Endothelial cell of umbilical vein (primary cell): ENCODE measurements at regions of chr13 and their contacts with region 1.

Region 1: DNA sequence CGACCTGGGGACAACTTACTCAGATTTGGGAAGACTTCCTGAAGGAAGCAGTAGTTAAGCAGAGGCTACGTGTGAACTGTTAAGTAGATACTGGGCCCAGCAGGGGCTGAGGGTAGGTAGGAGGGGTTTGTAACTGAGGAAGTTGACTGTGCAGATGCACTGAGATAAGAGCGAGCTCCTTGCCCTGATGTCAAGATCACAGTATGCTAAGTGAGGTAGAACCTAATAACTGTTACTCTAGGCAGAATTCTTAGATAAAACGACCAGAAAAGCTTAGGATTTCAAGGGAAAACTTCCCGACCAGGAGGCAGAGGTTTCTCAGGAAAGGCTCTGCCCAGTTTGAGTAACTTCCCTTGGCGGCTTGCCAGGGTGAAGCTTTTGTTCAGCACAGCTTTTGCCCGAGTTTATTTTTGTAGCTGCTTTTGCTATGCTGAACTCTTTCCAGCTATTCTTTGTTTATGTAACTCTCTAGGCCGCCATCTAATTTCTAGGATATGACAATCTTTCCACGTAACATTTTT is 632.1 kb downstream of the DIAPH3 start:
- DNase-seq: peak; percentile 98
- H3K4me3 ChIP-seq: no peak overlapping the region
- H3K27ac ChIP-seq: peak overlapping the region; percentile 73
- H3K4me1 ChIP-seq: peaks cover 40% of the 10 kb centered on the region
- H3K27me3 ChIP-seq: no peaks in the 10 kb centered on the region
- CTCF ChIP-seq: no peak
- POLR2A ChIP-seq: peak; percentile 68

Region 2: DNA sequence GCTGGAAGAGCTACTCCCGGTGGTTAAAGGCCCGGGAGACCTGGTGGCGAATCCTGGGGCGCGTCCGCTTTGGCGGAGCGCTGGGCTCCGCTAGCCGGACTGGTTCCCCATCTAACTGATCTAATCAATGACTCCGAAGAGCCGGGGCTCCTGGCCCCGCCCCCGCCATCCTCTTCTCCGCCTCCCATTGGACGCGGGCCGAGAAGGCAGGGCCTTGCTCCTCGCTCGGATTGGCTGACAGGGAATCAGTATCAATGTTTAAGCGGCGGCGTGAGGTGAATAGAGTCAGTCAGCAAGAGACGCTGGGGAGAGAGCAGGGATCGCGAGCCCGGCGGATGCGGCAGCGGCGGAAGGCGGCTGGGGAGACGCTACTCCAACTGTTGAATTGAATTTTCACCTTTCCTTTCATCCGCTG is 1901.8 kb before region 1 on chr13:
- CTCF ChIA-PET with region 1: interaction called, 3 read pairs
- POLR2A ChIA-PET with region 1: no interaction called
- dilution Hi-C with region 1: no loop called
- intact Hi-C with region 1: loop called (anchors 5 kb)
- DNase-seq: peak; percentile 95
- H3K4me3 ChIP-seq: peak overlapping the region; percentile 46 to 75 (median 68)
- H3K27ac ChIP-seq: no peak overlapping the region
- H3K4me1 ChIP-seq: peaks cover 24% of the 10 kb centered on the region
- H3K27me3 ChIP-seq: peaks cover 5 to 11% of the 10 kb centered on the region in 2 experiments
- CTCF ChIP-seq: no peak
- POLR2A ChIP-seq: peak; percentile 84

Region 3: DNA sequence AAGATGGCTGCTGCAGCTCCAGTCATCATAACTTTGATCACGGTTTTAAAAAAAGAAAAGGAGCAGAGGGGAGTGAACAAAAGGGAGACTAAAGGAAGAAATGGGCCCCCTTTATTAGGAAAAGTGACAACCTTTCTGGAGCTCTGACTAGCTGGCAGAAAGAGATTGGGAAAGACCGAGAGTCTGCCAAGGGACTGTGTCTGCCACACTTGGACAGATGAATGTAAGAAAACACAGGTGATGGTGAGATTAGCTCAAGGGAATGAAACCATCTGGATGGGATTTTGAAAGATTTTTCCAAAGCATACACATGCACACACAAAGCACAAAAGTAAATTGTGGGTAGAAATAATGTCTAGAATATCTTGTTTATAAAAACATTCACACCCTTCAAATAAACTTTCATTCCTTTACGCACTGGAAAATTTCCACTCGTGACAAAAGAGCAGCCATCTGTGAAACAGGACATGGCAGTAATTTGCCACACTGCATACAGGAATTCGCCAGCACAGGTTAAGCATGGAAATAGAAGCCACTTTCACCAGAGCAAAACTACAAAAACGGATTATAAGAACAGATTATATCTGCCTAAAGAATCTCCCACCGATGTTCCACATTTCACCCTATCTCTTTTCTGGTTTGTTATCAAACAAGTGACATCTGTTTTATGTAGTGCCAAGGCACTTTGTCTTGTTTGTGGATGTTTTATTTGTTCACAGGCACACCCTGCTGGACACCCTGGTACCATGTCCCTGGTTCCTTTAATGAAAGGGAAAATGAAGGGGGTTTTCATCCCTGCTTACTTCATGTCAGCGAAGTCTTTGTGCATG is 187.4 kb before region 1 on chr13:
- CTCF ChIA-PET with region 1: no interaction called
- POLR2A ChIA-PET with region 1: no interaction called
- dilution Hi-C with region 1: no loop called
- intact Hi-C with region 1: loop called (anchors 5 kb)
- DNase-seq: no peak
- H3K4me3 ChIP-seq: no peak overlapping the region
- H3K27ac ChIP-seq: no peak overlapping the region
- H3K4me1 ChIP-seq: peaks cover 12% of the 10 kb centered on the region
- H3K27me3 ChIP-seq: no peaks in the 10 kb centered on the region
- CTCF ChIP-seq: no peak
- POLR2A ChIP-seq: no peak

Region 4: DNA sequence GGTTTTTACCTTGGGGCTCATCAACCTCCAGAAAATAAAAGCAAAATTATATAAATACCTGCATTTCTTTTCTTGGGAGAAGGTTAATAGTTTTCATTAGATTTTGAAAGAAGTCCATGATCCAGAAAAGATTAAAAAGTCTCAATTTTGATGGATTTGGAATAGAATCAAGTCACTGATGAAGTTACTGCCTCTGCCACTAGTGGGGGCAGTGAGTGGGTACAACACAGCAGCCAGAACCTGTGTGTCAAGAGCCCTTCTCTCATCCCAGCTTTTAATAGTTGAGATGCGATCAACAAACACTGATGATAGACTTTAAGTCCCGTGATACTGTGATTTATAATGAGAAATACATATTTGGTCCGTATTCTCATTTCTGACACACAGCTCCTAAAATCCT is 54.6 kb before region 1 on chr13:
- CTCF ChIA-PET with region 1: no interaction called
- POLR2A ChIA-PET with region 1: no interaction called
- dilution Hi-C with region 1: no loop called
- intact Hi-C with region 1: loop called (anchors 1 kb)
- DNase-seq: peak; percentile 41
- H3K4me3 ChIP-seq: no peak overlapping the region
- H3K27ac ChIP-seq: no peak overlapping the region
- H3K4me1 ChIP-seq: peaks cover 44% of the 10 kb centered on the region
- H3K27me3 ChIP-seq: no peaks in the 10 kb centered on the region
- CTCF ChIP-seq: peak; percentile 51 to 59
- POLR2A ChIP-seq: no peak

Region 5: GRCh38 chr13:59633290-59633689 is 101.7 kb after region 1 on chr13:
- CTCF ChIA-PET with region 1: interaction called, 7 read pairs
- POLR2A ChIA-PET with region 1: interaction called, 4 read pairs
- dilution Hi-C with region 1: no loop called
- intact Hi-C with region 1: loop called (anchors 1 kb)
- DNase-seq: peak; percentile 81
- H3K4me3 ChIP-seq: no peak overlapping the region
- H3K27ac ChIP-seq: peak overlapping the region; percentile 58
- H3K4me1 ChIP-seq: peaks cover 27% of the 10 kb centered on the region
- H3K27me3 ChIP-seq: no peaks in the 10 kb centered on the region
- CTCF ChIP-seq: no peak
- POLR2A ChIP-seq: no peak

Region 6: GRCh38 chr13:59721926-59722910 is 190.6 kb after region 1 on chr13:
- CTCF ChIA-PET with region 1: no interaction called
- POLR2A ChIA-PET with region 1: no interaction called
- dilution Hi-C with region 1: no loop called
- intact Hi-C with region 1: no loop called
- DNase-seq: no peak
- H3K4me3 ChIP-seq: no peak overlapping the region
- H3K27ac ChIP-seq: no peak overlapping the region
- H3K4me1 ChIP-seq: no peaks in the 10 kb centered on the region
- H3K27me3 ChIP-seq: no peaks in the 10 kb centered on the region
- CTCF ChIP-seq: no peak
- POLR2A ChIP-seq: no peak

Region 7: GRCh38 chr13:60163478-60164233 is 632.0 kb after region 1 on chr13 and contains the start of gene DIAPH3:
- CTCF ChIA-PET with region 1: no interaction called
- POLR2A ChIA-PET with region 1: no interaction called
- dilution Hi-C with region 1: no loop called
- intact Hi-C with region 1: loop called (anchors 10 kb)
- DNase-seq: peak; percentile 96
- H3K4me3 ChIP-seq: peak within 1 kb of the TSS; percentile 91 to 97 (median 96)
- H3K27ac ChIP-seq: peak within 1 kb of the TSS; percentile 90
- H3K4me1 ChIP-seq: peaks cover 18% of the 10 kb centered on the region
- H3K27me3 ChIP-seq: no peaks in the 10 kb centered on the region
- CTCF ChIP-seq: no peak
- POLR2A ChIP-seq: peak; percentile 87
- total RNA-seq, gene DIAPH3: 40.9 and 44.0 TPM in 2 replicates